ENCODE measurements at regions of chr20 and their contacts with region 1.

Region 1: GRCh38 chr20:25399037-25399430 is 8.4 kb upstream of the ABHD12 start:
- DNase-seq: no peak

Region 2: DNA sequence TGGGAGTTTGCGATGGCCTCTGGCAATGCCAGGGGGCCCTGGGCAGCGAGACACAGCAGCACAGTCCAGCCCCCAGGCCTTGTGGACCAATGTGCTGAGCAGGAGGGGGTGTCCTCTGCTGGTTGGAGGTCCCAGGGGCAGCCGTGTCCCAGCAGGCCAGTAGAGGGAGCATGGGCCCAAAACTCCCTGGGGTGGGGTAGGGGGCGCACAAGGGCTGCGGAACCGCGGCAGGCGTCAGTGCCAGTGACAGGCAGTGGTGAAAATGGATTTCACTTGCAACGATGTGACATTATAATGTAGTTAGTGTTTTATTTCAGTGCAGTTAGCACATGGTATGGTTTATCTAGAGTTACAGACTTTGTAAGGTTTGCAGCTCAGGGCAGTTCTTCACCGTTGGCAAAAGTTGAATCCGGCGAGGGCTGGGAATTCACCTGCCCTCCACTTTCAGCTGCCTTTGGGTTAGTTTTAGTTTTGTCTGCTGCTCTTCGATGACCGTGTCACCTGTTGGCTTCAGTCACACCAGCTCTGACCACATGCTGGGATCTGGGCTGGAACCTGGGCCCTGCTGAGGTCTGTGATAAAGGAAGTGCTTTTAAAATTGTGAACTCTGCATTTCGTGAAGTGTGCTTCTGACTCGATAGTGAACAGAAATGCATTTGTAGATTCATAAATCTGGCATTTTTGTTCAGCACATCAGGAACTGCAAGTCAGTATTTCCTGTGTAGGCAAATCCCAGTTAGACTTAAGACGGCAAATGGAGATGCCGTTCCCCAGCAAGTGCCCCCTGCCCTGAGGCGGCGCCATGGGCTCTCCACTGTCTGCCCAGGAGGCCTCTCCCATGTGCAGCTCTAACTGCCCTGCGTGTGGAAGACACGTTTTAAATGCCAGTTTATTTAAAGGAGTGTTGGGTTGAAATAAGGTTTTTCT is 104.3 kb before region 1 on chr20:
- intact Hi-C with region 1: loop called (anchors 5 kb)
- DNase-seq: no peak

Measured in cardiac septum (tissue), 1 donor.